HepG2 (cell line): ENCODE measurements at regions of chr18 and their contacts with region 1.

Region 1: GRCh38 chr18:50786864-50787263 is 33.0 kb downstream of the MRO start:
- DNase-seq: no peak
- ATAC-seq: no peak
- H3K4me3 ChIP-seq: no peak overlapping the region
- H3K27ac ChIP-seq: no peak overlapping the region
- H3K4me1 ChIP-seq: no peaks in the 10 kb centered on the region
- H3K27me3 ChIP-seq: peaks cover 0 to 1% of the 10 kb centered on the region in 2 experiments; a peak in 1 of 5 replicates
- CTCF ChIP-seq: no peak
- EP300 ChIP-seq: no peak
- POLR2A ChIP-seq: no peak
- RAD21 ChIP-seq: no peak

Region 2: DNA sequence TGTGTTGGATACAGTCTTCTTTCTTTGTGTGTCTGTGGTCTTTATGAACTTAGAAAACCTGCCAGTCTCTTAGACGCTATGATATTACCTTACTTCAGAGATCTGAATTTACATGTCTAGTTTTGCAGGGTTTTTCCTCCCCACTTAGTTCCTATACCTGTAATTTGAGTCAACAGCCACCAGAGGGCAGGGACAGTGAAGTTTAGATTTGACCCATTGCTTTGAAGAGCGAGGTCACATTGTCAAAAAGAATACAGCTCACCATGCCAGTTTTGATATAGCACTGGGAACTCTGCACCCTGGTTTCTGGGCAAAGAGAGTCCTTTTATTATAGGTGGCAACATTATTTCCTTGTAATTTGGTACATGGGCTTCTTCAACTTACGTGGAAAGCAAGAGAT is 124.7 kb before region 1 on chr18:
- CTCF ChIA-PET with region 1: interaction called, 5 read pairs
- POLR2A ChIA-PET with region 1: no interaction called
- in situ Hi-C with region 1: no loop called
- intact Hi-C with region 1: loop called (anchors 1 kb)
- DNase-seq: peak; percentile 21
- ATAC-seq: no peak
- H3K4me3 ChIP-seq: no peak overlapping the region
- H3K27ac ChIP-seq: no peak overlapping the region
- H3K4me1 ChIP-seq: no peaks in the 10 kb centered on the region
- H3K27me3 ChIP-seq: peaks cover 0 to 5% of the 10 kb centered on the region in 2 experiments; a peak in 1 of 5 replicates
- CTCF ChIP-seq: peak; percentile 63
- EP300 ChIP-seq: no peak
- POLR2A ChIP-seq: no peak
- RAD21 ChIP-seq: no peak

Region 3: GRCh38 chr18:50775222-50775621 is 11.6 kb before region 1 on chr18:
- CTCF ChIA-PET with region 1: no interaction called
- POLR2A ChIA-PET with region 1: no interaction called
- in situ Hi-C with region 1: no loop called
- intact Hi-C with region 1: no loop called
- DNase-seq: no peak
- ATAC-seq: no peak
- H3K4me3 ChIP-seq: no peak overlapping the region
- H3K27ac ChIP-seq: no peak overlapping the region
- H3K4me1 ChIP-seq: no peaks in the 10 kb centered on the region
- H3K27me3 ChIP-seq: no peaks in the 10 kb centered on the region
- CTCF ChIP-seq: no peak
- EP300 ChIP-seq: no peak
- POLR2A ChIP-seq: no peak
- RAD21 ChIP-seq: no peak